Activated naive CD4-positive, alpha-beta T cell treated with anti-CD3 and anti-CD28 coated beads for 36 hours (primary cell): ENCODE measurements at regions of chr17 and their contacts with region 1.

Region 1: GRCh38 chr17:16521070-16521727 is 29.2 kb upstream of the LRRC75A start:
- DNase-seq: peak; percentile 82
- H3K4me3 Mint-ChIP-seq: no peak overlapping the region
- H3K27ac Mint-ChIP-seq: no peak overlapping the region
- H3K4me1 Mint-ChIP-seq: no peaks in the 10 kb centered on the region
- H3K27me3 Mint-ChIP-seq: peaks cover 26% of the 10 kb centered on the region

Region 2: DNA sequence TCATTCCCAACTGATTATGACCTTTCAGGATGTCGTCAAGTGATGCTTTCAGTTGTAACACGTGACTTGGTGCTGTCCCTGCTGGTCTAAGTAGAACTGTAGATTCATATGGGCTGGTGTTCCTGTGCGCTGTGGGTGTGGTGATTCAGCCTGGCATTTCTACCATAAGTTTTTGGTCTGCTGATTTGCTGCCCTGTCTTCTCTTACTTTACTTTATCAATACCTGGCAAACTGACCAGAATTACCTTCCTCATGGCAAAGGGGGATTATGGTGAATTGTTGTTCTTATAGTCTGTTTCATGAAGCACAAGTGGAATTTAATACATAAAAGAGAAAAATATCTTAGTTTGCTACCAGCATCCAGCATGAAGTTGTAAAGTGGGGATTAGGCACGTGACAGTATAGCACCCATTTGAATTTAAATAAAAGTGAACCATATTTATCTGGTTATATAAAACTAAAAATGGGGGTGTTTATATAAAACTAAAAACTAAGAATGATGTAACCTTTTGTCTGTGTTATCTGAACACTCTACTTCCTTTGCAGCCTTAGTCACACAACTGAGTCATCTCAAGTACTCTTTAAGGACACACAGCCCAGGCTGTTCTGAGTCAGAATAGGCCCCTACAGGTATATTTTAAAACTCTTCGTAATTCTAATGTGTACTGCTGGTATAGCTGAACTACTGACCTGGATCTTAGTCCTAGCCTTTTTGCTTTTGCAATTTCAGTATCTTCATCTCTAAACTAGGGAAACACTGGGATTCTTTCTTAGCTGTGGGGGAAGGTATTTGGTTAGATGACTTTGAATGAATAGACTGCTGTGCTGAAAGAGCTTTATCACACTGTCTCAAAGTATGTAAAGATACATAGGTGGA is 493.3 kb before region 1 on chr17:
- CTCF ChIA-PET with region 1: no interaction called
- intact Hi-C with region 1: no loop called
- DNase-seq: peak; percentile 82
- H3K4me3 Mint-ChIP-seq: peak overlapping the region; percentile 52
- H3K27ac Mint-ChIP-seq: peak overlapping the region; percentile 97
- H3K4me1 Mint-ChIP-seq: peaks cover 40% of the 10 kb centered on the region
- H3K27me3 Mint-ChIP-seq: no peaks in the 10 kb centered on the region

Region 3: GRCh38 chr17:16428098-16428882 is 92.9 kb before region 1 on chr17:
- CTCF ChIA-PET with region 1: interaction called, 12 read pairs
- intact Hi-C with region 1: no loop called
- DNase-seq: peak; percentile 64
- H3K4me3 Mint-ChIP-seq: no peak overlapping the region
- H3K27ac Mint-ChIP-seq: no peak overlapping the region
- H3K4me1 Mint-ChIP-seq: peaks cover 2% of the 10 kb centered on the region
- H3K27me3 Mint-ChIP-seq: no peaks in the 10 kb centered on the region

Region 4: DNA sequence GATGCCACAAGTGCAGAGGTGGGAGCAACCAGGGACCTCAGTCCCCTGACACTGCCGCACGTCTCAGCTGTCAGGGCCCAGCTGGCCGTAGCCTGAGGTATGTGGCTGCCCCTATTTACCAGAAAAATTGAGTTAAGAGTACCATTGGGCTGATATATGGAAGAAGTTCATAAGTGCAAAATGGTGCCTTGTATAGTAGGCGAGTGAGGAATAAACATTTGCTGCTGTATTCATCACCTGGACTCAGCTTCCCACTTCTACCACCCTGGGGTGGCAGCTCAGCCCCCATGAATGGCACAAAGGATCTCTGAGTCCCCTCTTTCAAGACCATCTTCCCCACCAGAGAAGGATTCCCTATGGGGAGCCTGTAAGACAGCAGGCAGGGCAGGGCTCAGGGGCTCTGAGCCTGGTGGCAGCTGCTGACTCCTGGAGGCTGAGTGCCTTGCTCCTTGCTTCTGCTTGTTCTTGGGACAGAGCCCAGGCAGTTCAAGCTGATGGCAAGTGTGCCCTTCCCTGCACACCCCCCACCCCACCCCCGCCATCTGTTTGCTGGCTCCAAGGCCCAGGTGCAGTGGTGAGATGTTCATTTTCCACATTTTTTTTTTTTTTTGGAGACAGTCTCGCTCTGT is 76.8 kb before region 1 on chr17:
- CTCF ChIA-PET with region 1: interaction called, 68 read pairs
- intact Hi-C with region 1: no loop called
- DNase-seq: no peak
- H3K4me3 Mint-ChIP-seq: no peak overlapping the region
- H3K27ac Mint-ChIP-seq: peak overlapping the region; percentile 46
- H3K4me1 Mint-ChIP-seq: peaks cover 65% of the 10 kb centered on the region
- H3K27me3 Mint-ChIP-seq: no peaks in the 10 kb centered on the region

Region 5: DNA sequence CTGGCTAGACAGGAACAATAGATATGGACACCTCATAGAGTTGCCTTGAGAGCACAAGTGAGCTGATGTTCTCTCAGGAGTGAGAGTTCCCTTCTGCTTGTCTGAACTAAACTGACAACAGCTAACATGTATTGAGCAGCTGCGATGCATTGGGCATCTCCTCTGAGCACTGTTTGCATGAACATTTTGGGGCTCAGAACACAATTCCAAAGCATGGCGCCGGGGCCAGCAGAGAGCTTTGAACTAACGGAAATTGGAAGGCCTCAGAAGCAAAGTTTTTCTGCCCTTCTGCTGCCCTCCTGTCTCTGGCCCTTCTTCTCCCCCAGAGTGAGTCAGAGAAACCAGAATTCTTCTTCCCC is 67.7 kb before region 1 on chr17:
- CTCF ChIA-PET with region 1: interaction called, 68 read pairs
- intact Hi-C with region 1: loop called (anchors 1 kb)
- DNase-seq: no peak
- H3K4me3 Mint-ChIP-seq: no peak overlapping the region
- H3K27ac Mint-ChIP-seq: no peak overlapping the region
- H3K4me1 Mint-ChIP-seq: peaks cover 11% of the 10 kb centered on the region
- H3K27me3 Mint-ChIP-seq: no peaks in the 10 kb centered on the region